BJ (cell line): ENCODE measurements at regions of chr1 and their contacts with region 1.

Region 1: GRCh38 chr1:214261206-214262123 is 19.5 kb upstream of the SMYD2 start:
- DNase-seq: peak; percentile 23
- H3K4me3 ChIP-seq: no peak overlapping the region
- H3K27me3 ChIP-seq: peaks cover 6% of the 10 kb centered on the region
- CTCF ChIP-seq: peak; percentile 99

Region 2: DNA sequence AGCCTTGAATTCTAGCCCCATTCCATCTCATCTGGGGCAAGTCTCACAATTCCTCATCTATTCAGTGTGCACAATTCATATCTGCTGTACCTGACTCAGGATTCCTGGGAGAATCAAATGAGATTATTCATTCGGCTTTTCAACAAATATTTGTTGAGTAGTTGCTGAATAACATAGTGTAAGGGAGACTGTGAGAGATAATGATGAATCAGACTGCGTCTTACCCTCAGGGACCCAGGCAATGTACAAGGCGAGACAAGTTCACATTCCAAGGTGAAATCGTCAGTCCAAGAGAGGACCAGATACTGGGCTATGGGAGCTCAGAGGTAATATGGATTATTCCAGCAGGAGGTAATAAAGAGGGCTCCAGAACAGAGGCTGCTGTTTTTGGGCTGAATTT is 48.3 kb before region 1 on chr1:
- CTCF ChIA-PET with region 1: interaction called, 42 read pairs
- POLR2A ChIA-PET with region 1: no interaction called
- DNase-seq: no peak
- H3K4me3 ChIP-seq: no peak overlapping the region
- H3K27me3 ChIP-seq: peaks cover 6% of the 10 kb centered on the region
- CTCF ChIP-seq: no peak

Region 3: GRCh38 chr1:214234635-214235025 is 26.8 kb before region 1 on chr1:
- CTCF ChIA-PET with region 1: interaction called, 13 read pairs
- POLR2A ChIA-PET with region 1: no interaction called
- DNase-seq: no peak
- H3K4me3 ChIP-seq: no peak overlapping the region
- H3K27me3 ChIP-seq: no peaks in the 10 kb centered on the region
- CTCF ChIP-seq: no peak

Region 4: DNA sequence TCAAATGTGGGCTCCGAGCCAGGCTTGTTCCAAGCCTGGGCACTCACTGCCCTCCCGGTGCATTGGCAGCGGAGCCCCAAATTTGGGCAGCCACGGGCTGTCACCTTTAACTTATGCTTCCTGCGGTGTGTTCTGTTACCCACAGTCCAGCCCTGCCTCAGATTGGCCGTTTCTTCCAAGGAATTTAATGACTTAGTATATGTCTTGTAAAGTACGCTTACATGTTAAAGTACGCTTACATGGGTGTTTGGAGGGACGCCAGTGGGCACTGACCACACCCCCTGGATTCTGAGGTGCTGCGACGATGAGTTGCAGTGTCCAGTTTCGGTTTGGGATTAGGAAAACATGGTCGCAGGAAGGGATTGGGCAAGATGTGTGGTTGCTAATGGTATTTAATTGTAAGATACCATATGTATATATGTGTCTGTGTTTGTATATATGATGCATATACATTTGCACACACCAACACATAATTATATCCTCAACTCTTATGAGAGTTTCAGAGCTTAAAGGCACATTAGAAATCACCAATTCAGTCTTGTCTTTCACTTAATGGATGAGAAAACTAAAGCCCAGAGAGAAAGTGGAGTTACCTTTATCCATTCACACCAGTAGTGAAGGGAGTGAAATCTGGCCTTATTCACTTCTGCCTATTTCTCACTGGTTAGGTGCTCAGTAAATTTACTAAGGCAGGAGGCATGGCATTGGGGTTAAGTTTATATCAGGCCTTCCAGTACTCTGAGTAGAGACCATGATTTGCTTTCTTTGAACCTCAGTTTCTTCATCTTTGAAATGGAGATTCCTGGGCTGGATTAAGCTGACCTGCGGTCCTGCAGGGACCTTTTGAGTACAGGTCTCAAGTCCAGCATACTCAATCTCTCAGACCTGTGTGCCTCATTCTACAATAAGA is 20.5 kb after region 1 on chr1:
- CTCF ChIA-PET with region 1: interaction called, 29 read pairs
- POLR2A ChIA-PET with region 1: no interaction called
- DNase-seq: no peak
- H3K4me3 ChIP-seq: peak overlapping the region; percentile 74
- H3K27me3 ChIP-seq: no peaks in the 10 kb centered on the region
- CTCF ChIP-seq: no peak

Region 5: DNA sequence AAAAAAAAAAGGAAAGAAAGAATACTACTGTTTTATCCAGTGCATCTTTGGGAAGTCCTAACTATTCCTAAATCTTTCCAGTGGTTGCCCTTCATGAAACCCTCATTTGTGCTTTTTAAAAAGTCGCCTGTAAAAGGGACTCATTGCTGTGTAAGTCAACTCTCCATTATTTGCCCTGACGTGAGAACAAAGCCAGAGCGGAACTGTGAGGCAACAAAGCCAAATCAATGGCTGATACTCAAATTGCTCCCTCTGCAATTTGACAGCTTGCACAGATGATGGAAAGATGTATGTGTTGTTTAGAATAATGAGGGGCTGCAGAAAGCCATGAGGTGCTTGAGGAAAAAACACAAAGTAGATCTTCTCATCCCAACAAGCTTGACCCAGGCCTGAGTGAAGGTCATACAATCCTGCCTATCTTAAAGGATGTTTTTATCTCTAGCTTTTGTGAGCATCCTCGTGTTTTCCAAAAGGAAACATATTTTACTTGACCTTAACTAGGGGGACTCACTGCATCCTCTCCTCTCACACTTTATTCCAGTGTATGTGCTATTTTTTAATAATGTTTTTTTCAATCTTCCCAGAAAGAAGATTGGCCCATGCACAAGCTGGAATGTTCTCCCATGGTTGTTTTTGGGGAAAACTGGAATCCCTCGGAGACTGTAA is 52.8 kb after region 1 on chr1:
- CTCF ChIA-PET with region 1: interaction called, 45 read pairs
- POLR2A ChIA-PET with region 1: no interaction called
- DNase-seq: no peak
- H3K4me3 ChIP-seq: no peak overlapping the region
- H3K27me3 ChIP-seq: no peaks in the 10 kb centered on the region
- CTCF ChIP-seq: no peak

Region 6: GRCh38 chr1:214551436-214552173 is 290.1 kb after region 1 on chr1 and contains the start of gene PTPN14:
- CTCF ChIA-PET with region 1: no interaction called
- POLR2A ChIA-PET with region 1: no interaction called
- DNase-seq: peak; percentile 77
- H3K4me3 ChIP-seq: peak within 1 kb of the TSS; percentile 93
- H3K27me3 ChIP-seq: no peaks in the 10 kb centered on the region
- CTCF ChIP-seq: peak; percentile 60
- polyA plus RNA-seq, gene PTPN14: 23.7 and 29.4 TPM in 2 replicates

Region 7: DNA sequence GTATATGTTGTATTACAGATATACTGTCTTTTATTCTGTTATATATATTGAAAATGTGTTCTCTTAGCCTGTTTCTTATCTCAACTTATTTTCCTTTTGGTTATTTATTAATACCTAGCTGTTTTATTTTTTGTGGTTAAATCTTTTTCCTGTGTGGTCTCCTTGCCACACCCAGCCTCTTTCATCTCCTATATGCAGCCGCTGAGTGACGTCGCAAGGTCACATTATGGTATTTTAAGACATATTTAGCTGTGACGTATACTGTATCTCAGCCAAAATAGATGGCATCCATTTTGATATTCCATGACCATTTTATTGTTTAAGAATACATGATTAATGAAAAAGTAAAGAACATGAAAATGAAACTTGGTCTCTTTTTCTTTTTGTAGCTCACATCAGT is 370.6 kb after region 1 on chr1:
- CTCF ChIA-PET with region 1: interaction called, 11 read pairs
- POLR2A ChIA-PET with region 1: no interaction called
- DNase-seq: no peak
- H3K4me3 ChIP-seq: no peak overlapping the region
- H3K27me3 ChIP-seq: no peaks in the 10 kb centered on the region
- CTCF ChIP-seq: no peak

Region 8: DNA sequence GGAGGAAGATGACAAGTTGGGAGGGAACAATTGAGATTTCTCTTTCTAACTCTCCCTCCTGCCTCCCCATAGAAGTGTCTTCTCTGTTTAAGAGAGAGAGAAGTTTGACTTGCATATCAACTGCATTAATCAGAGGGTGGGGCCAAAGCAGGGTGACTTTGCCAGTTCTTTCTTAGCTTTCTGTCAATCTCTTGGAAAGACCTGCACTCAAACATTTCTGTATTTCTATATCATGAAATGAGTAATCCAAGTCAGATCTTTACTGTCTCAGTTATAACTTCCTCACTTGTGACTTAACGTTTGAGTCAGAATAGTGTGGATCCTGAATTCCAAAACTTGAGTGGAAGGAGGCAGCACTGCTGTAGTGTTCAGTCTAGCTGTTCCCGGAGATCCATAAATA is 640.3 kb after region 1 on chr1:
- CTCF ChIA-PET with region 1: no interaction called
- POLR2A ChIA-PET with region 1: no interaction called
- DNase-seq: no peak
- H3K4me3 ChIP-seq: no peak overlapping the region
- H3K27me3 ChIP-seq: no peaks in the 10 kb centered on the region
- CTCF ChIP-seq: no peak